ENCODE measurements at regions of chr16 and their contacts with region 1.

Region 1: GRCh38 chr16:18801197-18801972 is at the start of gene ARL6IP1:
- DNase-seq: peak; percentile 99
- H3K4me3 Mint-ChIP-seq: peak within 1 kb of the TSS; percentile 98
- H3K27ac Mint-ChIP-seq: peak within 1 kb of the TSS; percentile 99
- H3K4me1 Mint-ChIP-seq: peaks cover 36% of the 10 kb centered on the region
- H3K27me3 Mint-ChIP-seq: no peaks in the 10 kb centered on the region
- CTCF ChIP-seq: peak; percentile 91
- total RNA-seq, gene ARL6IP1: 296 and 313 TPM in 2 replicates

Region 2: GRCh38 chr16:18789850-18790724 is 11.3 kb before region 1 on chr16 and contains the start of gene RPS15A:
- CTCF ChIA-PET with region 1: interaction called, 39 read pairs
- intact Hi-C with region 1: no loop called
- DNase-seq: peak; percentile 97
- H3K4me3 Mint-ChIP-seq: peak within 1 kb of the TSS; percentile 96
- H3K27ac Mint-ChIP-seq: peak within 1 kb of the TSS; percentile 98
- H3K4me1 Mint-ChIP-seq: peaks cover 43% of the 10 kb centered on the region
- H3K27me3 Mint-ChIP-seq: no peaks in the 10 kb centered on the region
- CTCF ChIP-seq: no peak
- total RNA-seq, gene RPS15A: 1,182 and 1,352 TPM in 2 replicates

Region 3: GRCh38 chr16:18816286-18816685 is 14.9 kb after region 1 on chr16:
- CTCF ChIA-PET with region 1: no interaction called
- intact Hi-C with region 1: no loop called
- DNase-seq: no peak
- H3K4me3 Mint-ChIP-seq: no peak overlapping the region
- H3K27ac Mint-ChIP-seq: no peak overlapping the region
- H3K4me1 Mint-ChIP-seq: no peaks in the 10 kb centered on the region
- H3K27me3 Mint-ChIP-seq: no peaks in the 10 kb centered on the region
- CTCF ChIP-seq: no peak

Region 4: DNA sequence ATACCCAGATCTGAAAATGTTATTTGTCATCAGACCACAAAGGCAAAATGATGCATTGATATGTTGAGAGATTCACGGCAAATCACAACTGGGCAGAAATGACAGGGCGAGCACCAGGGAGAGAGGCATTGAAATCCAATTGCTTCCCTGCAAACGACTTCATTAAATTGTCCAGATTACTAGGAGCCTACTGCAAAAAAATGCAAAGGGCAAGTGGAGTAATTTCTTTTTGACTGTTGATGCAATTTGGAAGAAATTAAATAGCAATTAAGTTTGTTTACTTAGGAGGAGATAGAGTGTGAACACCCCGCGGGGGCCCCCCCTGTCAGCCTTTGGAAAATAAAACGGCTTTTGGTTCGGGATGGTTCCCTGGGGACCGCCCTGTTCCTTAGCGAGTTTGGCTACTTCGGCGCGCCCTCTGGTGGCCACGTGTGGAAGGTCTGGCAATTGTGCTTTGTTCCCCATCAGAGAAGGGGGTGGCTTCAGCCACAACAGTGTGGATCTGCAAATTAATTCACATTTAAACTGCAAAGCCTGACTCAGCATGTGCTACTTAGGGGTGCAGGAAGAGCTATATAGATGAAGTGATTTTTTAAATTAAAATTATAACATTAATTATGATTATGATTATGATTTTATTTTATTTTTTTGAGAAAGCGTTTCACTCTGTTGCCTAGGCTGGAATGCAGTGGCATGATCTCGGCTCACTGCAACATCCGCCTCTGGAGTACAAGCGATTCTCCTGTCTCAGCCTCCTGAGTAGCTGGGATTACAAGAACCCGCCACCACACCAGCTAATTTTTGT is 167.9 kb after region 1 on chr16:
- CTCF ChIA-PET with region 1: no interaction called
- intact Hi-C with region 1: loop called (anchors 5 kb)
- DNase-seq: peak; percentile 90
- H3K4me3 Mint-ChIP-seq: no peak overlapping the region
- H3K27ac Mint-ChIP-seq: no peak overlapping the region
- H3K4me1 Mint-ChIP-seq: peaks cover 15% of the 10 kb centered on the region
- H3K27me3 Mint-ChIP-seq: no peaks in the 10 kb centered on the region
- CTCF ChIP-seq: peak; percentile 92

Measured in Calu3 (cell line).